ENCODE measurements at regions of chr3 and their contacts with region 1.

Region 1: DNA sequence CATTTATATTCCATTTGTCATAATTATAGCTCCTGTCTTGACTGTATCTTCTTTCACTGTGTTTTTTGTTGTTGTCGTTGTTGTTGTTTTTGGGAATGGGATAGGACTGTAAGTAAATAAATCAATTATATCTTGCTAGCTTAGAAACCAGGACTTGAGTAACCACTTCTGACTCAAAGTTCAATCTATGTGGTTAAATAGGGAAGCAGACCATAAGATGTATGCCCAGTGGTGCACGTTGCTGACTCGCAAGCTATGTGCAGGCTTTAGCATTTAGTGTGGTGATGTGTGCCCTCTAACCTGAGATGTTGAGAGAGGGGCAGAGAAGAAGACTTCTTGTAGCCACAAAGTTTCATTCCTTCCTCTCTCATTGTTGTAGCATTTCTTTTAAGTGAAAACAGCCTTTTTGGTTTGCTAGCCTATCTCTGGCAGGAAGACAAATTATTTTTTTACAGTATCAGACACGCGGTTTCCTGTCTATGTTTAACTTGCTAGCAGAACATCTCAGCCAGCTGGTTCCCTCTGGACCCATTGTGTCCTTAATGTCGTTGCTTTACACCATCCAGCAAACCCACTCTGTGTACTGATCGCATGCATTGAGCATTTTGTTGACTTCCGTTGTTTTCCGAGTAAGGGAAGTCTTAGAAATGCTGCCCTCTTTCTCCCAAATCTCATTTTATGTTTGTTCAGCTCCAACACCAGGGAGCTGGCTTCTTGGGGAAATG is 52.1 kb downstream of the TGFBR2 start:
- DNase-seq: no peak
- H3K4me3 ChIP-seq: no peak overlapping the region
- H3K4me3 Mint-ChIP-seq: peak overlapping the region; percentile 5
- H3K27ac Mint-ChIP-seq: peak overlapping the region; percentile 46
- H3K4me1 ChIP-seq: peaks cover 49% of the 10 kb centered on the region
- H3K4me1 Mint-ChIP-seq: peaks cover 60% of the 10 kb centered on the region
- H3K27me3 ChIP-seq: no peaks in the 10 kb centered on the region
- H3K27me3 Mint-ChIP-seq: no peaks in the 10 kb centered on the region
- CTCF ChIP-seq: no peak

Region 2: GRCh38 chr3:30614943-30615342 is 43.5 kb before region 1 on chr3:
- CTCF ChIA-PET with region 1: no interaction called
- POLR2A ChIA-PET with region 1: no interaction called
- intact Hi-C with region 1: loop called (anchors 5 kb)
- DNase-seq: no peak
- H3K4me3 ChIP-seq: no peak overlapping the region
- H3K4me3 Mint-ChIP-seq: no peak overlapping the region
- H3K27ac Mint-ChIP-seq: no peak overlapping the region
- H3K4me1 ChIP-seq: peaks cover 76% of the 10 kb centered on the region
- H3K4me1 Mint-ChIP-seq: peaks cover 70% of the 10 kb centered on the region
- H3K27me3 ChIP-seq: no peaks in the 10 kb centered on the region
- H3K27me3 Mint-ChIP-seq: no peaks in the 10 kb centered on the region
- CTCF ChIP-seq: no peak

Region 3: GRCh38 chr3:30924763-30925162 is 266.3 kb after region 1 on chr3:
- CTCF ChIA-PET with region 1: no interaction called
- POLR2A ChIA-PET with region 1: no interaction called
- intact Hi-C with region 1: no loop called
- DNase-seq: no peak
- H3K4me3 ChIP-seq: no peak overlapping the region
- H3K4me3 Mint-ChIP-seq: no peak overlapping the region
- H3K27ac Mint-ChIP-seq: no peak overlapping the region
- H3K4me1 ChIP-seq: no peaks in the 10 kb centered on the region
- H3K4me1 Mint-ChIP-seq: peaks cover 4% of the 10 kb centered on the region
- H3K27me3 ChIP-seq: no peaks in the 10 kb centered on the region
- H3K27me3 Mint-ChIP-seq: no peaks in the 10 kb centered on the region
- CTCF ChIP-seq: no peak